ENCODE measurements at regions of chr2 and their contacts with region 1.

Region 1: GRCh38 chr2:36812196-36812595 is 115.7 kb downstream of the VIT start:
- DNase-seq: peak; percentile 12
- H3K4me3 Mint-ChIP-seq: no peak overlapping the region
- H3K27ac Mint-ChIP-seq: no peak overlapping the region
- H3K4me1 Mint-ChIP-seq: no peaks in the 10 kb centered on the region
- H3K27me3 Mint-ChIP-seq: peaks cover 5% of the 10 kb centered on the region
- CTCF ChIP-seq: no peak

Region 2: GRCh38 chr2:36839976-36840617 is 27.9 kb after region 1 on chr2:
- CTCF ChIA-PET with region 1: no interaction called
- POLR2A ChIA-PET with region 1: no interaction called
- intact Hi-C with region 1: no loop called
- DNase-seq: no peak
- H3K4me3 Mint-ChIP-seq: no peak overlapping the region
- H3K27ac Mint-ChIP-seq: no peak overlapping the region
- H3K4me1 Mint-ChIP-seq: no peaks in the 10 kb centered on the region
- H3K27me3 Mint-ChIP-seq: no peaks in the 10 kb centered on the region
- CTCF ChIP-seq: no peak

Region 3: DNA sequence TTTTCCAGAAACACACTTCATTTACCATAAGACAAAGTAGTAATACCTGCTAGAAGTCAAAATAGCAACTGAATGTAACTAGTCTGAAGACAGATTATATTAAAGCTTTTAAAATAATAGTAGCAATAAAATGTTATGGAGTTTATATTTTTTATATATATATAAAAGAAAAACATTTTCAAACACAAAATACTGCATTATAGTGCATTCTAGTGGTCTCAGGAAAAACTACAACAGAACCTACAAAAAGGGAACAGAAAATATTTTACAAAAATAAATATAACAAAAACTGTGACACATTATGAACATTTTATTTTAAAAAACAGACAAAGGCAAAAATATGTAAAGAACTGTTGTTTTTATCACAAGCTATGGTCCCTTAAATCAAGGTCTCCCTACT is 106.1 kb after region 1 on chr2:
- CTCF ChIA-PET with region 1: no interaction called
- POLR2A ChIA-PET with region 1: no interaction called
- intact Hi-C with region 1: loop called (anchors 10 kb)
- DNase-seq: no peak
- H3K4me3 Mint-ChIP-seq: no peak overlapping the region
- H3K27ac Mint-ChIP-seq: no peak overlapping the region
- H3K4me1 Mint-ChIP-seq: peaks cover 7% of the 10 kb centered on the region
- H3K27me3 Mint-ChIP-seq: no peaks in the 10 kb centered on the region
- CTCF ChIP-seq: peak; percentile 21